T-cell (primary cell): ENCODE measurements at regions of chr2 and their contacts with region 1.

Region 1: GRCh38 chr2:135059577-135059976 is 7.5 kb downstream of the RAB3GAP1 start:
- DNase-seq: no peak
- ATAC-seq: no peak
- H3K4me3 ChIP-seq: no peak overlapping the region
- H3K4me3 Mint-ChIP-seq: no peak overlapping the region
- H3K27ac ChIP-seq: no peak overlapping the region
- H3K27ac Mint-ChIP-seq: no peak overlapping the region
- H3K4me1 ChIP-seq: peaks cover 6 to 14% of the 10 kb centered on the region in 2 experiments
- H3K4me1 Mint-ChIP-seq: peaks cover 65 to 72% (median 65%) of the 10 kb centered on the region in 3 donors
- H3K27me3 ChIP-seq: no peaks in the 10 kb centered on the region
- H3K27me3 Mint-ChIP-seq: no peaks in the 10 kb centered on the region

Region 2: DNA sequence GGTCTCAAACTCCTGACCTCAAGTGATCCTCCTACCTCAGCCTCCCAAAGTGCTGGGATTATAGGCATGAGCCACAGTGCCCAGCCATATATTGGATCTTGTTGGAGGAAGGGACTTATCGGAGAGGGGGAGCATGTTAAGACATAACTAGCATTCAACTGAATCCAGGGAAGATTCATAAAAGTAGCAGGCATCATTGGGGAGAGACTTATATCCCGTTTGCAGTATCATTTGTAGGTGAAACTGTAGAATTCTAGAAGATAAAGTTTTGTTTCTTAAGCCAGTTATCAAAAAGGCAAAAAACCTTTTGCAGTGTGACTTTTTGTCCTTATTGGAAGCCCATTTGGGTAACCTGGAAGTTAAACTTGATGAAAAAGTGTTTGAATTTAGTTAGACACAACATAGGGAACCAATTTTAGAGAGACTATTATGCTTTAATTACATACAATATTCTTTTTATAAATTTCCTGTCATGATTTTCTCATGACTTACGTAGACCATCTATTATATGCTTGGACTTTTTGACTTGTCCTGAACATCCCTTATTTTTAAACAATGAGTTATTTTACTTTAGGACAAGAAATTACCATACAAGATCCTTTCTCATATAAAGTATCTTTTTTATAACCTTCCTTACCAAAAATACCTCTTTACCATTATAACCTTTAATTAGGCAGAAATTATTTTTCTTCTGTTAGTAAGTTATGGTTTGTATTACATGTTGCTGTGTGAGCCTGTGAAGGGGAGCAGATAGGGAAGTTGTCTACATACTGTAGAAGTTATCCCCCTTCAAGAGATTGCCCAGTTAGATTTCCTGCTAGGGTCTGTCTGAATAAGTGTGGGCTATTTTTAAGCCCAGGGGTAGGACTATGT is 12.8 kb after region 1 on chr2:
- CTCF ChIA-PET with region 1: no interaction called
- POLR2A ChIA-PET with region 1: no interaction called
- DNase-seq: no peak
- ATAC-seq: no peak
- H3K4me3 ChIP-seq: no peak overlapping the region
- H3K4me3 Mint-ChIP-seq: no peak overlapping the region
- H3K27ac ChIP-seq: no peak overlapping the region
- H3K27ac Mint-ChIP-seq: no peak overlapping the region
- H3K4me1 ChIP-seq: no peaks in the 10 kb centered on the region
- H3K4me1 Mint-ChIP-seq: peaks cover 32 to 45% (median 44%) of the 10 kb centered on the region in 3 donors
- H3K27me3 ChIP-seq: no peaks in the 10 kb centered on the region
- H3K27me3 Mint-ChIP-seq: no peaks in the 10 kb centered on the region

Region 3: GRCh38 chr2:135093670-135094330 is 34.2 kb after region 1 on chr2:
- CTCF ChIA-PET with region 1: no interaction called
- POLR2A ChIA-PET with region 1: interaction called in 1 of 2 experiments, 12 read pairs
- DNase-seq: no peak
- ATAC-seq: no peak
- H3K4me3 ChIP-seq: no peak overlapping the region
- H3K4me3 Mint-ChIP-seq: no peak overlapping the region
- H3K27ac ChIP-seq: no peak overlapping the region
- H3K27ac Mint-ChIP-seq: no peak overlapping the region
- H3K4me1 ChIP-seq: peaks cover 0 to 2% of the 10 kb centered on the region in 2 experiments
- H3K4me1 Mint-ChIP-seq: peaks cover 5 to 33% (median 20%) of the 10 kb centered on the region in 3 donors
- H3K27me3 ChIP-seq: no peaks in the 10 kb centered on the region
- H3K27me3 Mint-ChIP-seq: no peaks in the 10 kb centered on the region